ENCODE measurements at regions of chr10 and their contacts with region 1.

Region 1: DNA sequence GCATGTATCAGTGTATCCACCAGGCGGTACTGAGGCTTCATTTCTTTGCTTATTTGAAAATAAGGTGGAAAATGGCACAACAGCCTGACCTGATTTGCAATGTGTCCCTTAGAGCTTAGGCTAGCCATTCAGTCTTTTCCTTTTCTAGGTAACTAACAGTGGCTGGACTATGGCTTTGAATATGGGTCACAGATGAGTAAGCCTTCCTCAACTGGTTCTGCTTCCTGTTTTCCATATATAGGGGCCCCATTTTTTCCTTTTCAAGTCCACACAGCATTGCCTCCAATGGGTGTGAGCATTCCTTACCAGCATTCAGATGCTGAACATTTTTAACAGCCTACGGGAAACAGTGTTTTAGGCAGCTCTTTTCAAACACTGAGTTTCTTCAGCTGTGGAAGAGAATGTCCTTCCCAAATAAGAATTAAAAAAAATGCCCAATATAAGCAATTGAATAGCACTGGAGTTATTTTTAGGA is 3.9 kb upstream of the ITGB1 start:
- DNase-seq: peak; percentile 66
- H3K4me3 ChIP-seq: no peak overlapping the region
- H3K27me3 ChIP-seq: no peaks in the 10 kb centered on the region
- CTCF ChIP-seq: no peak

Region 2: GRCh38 chr10:32985781-32986350 is 23.9 kb after region 1 on chr10:
- CTCF ChIA-PET with region 1: interaction called, 6 read pairs
- POLR2A ChIA-PET with region 1: interaction called, 33 read pairs
- DNase-seq: no peak
- H3K4me3 ChIP-seq: no peak overlapping the region
- H3K27me3 ChIP-seq: no peaks in the 10 kb centered on the region
- CTCF ChIP-seq: no peak

Region 3: GRCh38 chr10:33412653-33413361 is 450.9 kb after region 1 on chr10:
- CTCF ChIA-PET with region 1: no interaction called
- POLR2A ChIA-PET with region 1: no interaction called
- DNase-seq: peak; percentile 54
- H3K4me3 ChIP-seq: no peak overlapping the region
- H3K27me3 ChIP-seq: no peaks in the 10 kb centered on the region
- CTCF ChIP-seq: no peak

Measured in BJ (cell line).